ENCODE measurements at regions of chr1 and their contacts with region 1.

Region 1: GRCh38 chr1:203649999-203650855 is 23.6 kb downstream of the ATP2B4 start:
- DNase-seq: peak; percentile 70
- ATAC-seq: peak; percentile 76
- H3K4me3 Mint-ChIP-seq: peak overlapping the region; percentile 63
- H3K27ac Mint-ChIP-seq: peak overlapping the region; percentile 76
- H3K4me1 Mint-ChIP-seq: peaks cover 77% of the 10 kb centered on the region
- H3K27me3 Mint-ChIP-seq: no peaks in the 10 kb centered on the region

Region 2: DNA sequence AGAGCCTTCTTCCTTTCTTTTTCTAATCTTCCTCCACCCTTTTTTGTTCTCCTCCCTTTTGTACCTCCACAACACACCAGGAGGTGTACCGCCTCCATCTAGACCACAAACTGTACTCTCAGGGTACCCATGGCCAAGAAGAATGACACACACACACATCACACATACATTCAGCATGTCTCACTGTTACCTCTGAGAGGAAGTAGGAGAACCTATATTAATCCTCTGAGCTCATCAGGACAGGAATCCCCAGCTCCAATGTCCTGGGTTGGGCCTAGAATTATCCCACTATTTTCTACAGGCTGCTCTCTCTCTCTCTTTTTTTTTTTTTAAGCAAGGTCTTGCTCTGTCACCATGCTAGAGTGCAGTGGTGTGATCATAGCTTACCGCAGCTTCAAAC is 13.1 kb after region 1 on chr1:
- CTCF ChIA-PET with region 1: interaction called, 14 read pairs
- POLR2A ChIA-PET with region 1: interaction called, 4 read pairs
- DNase-seq: no peak
- ATAC-seq: peak; percentile 57
- H3K4me3 Mint-ChIP-seq: no peak overlapping the region
- H3K27ac Mint-ChIP-seq: peak overlapping the region; percentile 26
- H3K4me1 Mint-ChIP-seq: peaks cover 70% of the 10 kb centered on the region
- H3K27me3 Mint-ChIP-seq: no peaks in the 10 kb centered on the region

Measured in activated CD8-positive, alpha-beta T cell treated with anti-CD3 and anti-CD28 coated beads, Interleukin-2, amount 10 ng/mL, durations not matched to agents 7 days and 5 days (primary cell).